H1 (cell line): ENCODE measurements at regions of chr10 and their contacts with region 1.

Region 1: GRCh38 chr10:114304017-114304570 is 65.0 kb downstream of the VWA2 start:
- DNase-seq: peak in 1 of 2 experiments; percentile 86
- H3K4me3 ChIP-seq: peak overlapping the region; percentile 38 to 78 (median 70)
- H3K27ac ChIP-seq: no peak overlapping the region
- H3K4me1 ChIP-seq: peaks cover 0 to 8% (median 2%) of the 10 kb centered on the region in 4 experiments; a peak in 4 of 7 replicates
- H3K27me3 ChIP-seq: no peaks in the 10 kb centered on the region
- CTCF ChIP-seq: peak; percentile 69 to 90 (median 90)
- EP300 ChIP-seq: no peak
- POLR2A ChIP-seq: no peak
- RAD21 ChIP-seq: peak; percentile 94

Region 2: DNA sequence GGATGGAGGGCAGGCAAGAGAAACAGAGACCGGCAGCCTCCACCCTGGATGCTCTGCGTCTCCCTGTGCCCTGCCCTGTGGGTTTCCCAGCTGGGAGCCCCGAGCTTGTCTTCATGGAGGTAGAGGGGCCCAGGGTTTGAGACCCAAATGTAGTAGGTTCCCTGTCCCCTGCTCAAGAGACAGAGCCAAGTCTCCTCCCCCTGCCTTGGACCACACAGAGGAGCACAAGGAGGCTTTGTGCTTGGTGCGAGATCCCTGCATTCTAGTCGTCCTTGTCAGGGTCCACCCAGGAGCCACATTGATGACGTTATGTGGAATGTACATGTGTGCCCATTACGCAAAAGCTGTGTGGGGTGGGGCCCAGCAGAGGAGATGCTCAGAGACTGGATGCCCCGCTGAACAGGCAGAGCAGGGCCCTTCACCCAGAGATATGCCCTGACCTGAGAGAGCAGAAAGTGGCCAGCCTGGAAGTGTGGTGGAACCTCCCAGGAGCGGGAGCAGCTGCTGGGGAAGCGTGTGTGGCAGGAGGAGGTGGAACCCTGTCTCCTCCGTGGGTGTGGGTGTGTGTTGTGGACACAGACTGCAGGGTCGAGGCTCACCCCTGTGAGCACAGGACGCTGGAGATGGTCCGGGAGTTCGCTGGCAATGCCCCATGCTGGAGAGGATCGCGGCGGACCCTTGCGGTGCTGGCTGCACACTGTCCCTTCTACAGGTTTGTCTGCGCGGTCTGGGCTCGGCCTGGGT is 25.8 kb before region 1 on chr10:
- CTCF ChIA-PET with region 1: interaction called, 24 read pairs
- POLR2A ChIA-PET with region 1: no interaction called
- DNase-seq: no peak
- H3K4me3 ChIP-seq: no peak overlapping the region
- H3K27ac ChIP-seq: no peak overlapping the region
- H3K4me1 ChIP-seq: no peaks in the 10 kb centered on the region; a peak in 1 of 7 replicates
- H3K27me3 ChIP-seq: no peaks in the 10 kb centered on the region; a peak in 1 of 7 replicates
- CTCF ChIP-seq: no peak
- EP300 ChIP-seq: no peak
- POLR2A ChIP-seq: no peak
- RAD21 ChIP-seq: no peak

Region 3: GRCh38 chr10:114328874-114329273 is 24.8 kb after region 1 on chr10:
- CTCF ChIA-PET with region 1: interaction called, 22 read pairs
- POLR2A ChIA-PET with region 1: interaction called, 3 read pairs
- DNase-seq: no peak
- H3K4me3 ChIP-seq: no peak overlapping the region
- H3K27ac ChIP-seq: no peak overlapping the region
- H3K4me1 ChIP-seq: no peaks in the 10 kb centered on the region; a peak in 1 of 7 replicates
- H3K27me3 ChIP-seq: no peaks in the 10 kb centered on the region
- CTCF ChIP-seq: no peak
- EP300 ChIP-seq: no peak
- POLR2A ChIP-seq: no peak
- RAD21 ChIP-seq: no peak

Region 4: DNA sequence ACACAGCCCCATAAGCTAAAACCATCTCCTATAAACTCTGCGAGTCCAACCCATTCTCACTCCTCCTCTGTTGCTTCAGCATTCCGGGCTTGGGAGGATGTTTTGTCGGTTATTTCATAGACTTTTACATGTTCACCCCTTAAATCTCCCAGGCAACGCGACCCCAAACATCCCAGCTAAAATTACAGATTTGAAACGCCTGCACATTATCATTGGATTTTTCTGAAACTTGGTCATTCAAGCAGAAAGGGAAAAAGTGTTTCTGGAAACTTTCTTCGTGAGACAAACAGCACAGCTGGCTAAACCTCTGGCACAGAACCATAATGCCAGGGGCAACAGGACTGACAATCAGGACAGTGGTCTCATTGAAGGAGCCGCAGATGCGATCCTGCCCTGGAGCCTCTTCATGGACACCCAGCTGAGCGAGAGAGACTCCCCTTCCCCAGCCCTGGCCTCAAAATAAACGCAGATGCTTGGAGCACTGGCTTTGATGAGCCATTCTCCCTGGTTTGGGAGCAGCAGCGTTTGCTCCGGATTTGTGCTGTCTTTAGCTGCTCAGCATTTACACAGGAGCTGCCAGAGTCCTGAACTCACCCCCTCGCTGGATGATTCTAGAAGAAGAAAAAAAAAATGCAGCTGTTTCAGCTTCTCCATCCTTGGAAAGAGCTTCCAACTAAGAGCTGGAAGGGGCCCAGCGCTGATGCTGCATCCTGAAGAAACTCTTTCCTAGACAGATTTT is 70.1 kb after region 1 on chr10:
- CTCF ChIA-PET with region 1: interaction called, 34 read pairs
- POLR2A ChIA-PET with region 1: no interaction called
- DNase-seq: no peak
- H3K4me3 ChIP-seq: no peak overlapping the region
- H3K27ac ChIP-seq: no peak overlapping the region
- H3K4me1 ChIP-seq: 0 out of 7 replicates have a peak, but pooled peaks cover 0 to 2% (median 0%) of the 10 kb centered on the region in 4 experiments
- H3K27me3 ChIP-seq: no peaks in the 10 kb centered on the region
- CTCF ChIP-seq: no peak
- EP300 ChIP-seq: no peak
- POLR2A ChIP-seq: no peak
- RAD21 ChIP-seq: no peak

Region 5: DNA sequence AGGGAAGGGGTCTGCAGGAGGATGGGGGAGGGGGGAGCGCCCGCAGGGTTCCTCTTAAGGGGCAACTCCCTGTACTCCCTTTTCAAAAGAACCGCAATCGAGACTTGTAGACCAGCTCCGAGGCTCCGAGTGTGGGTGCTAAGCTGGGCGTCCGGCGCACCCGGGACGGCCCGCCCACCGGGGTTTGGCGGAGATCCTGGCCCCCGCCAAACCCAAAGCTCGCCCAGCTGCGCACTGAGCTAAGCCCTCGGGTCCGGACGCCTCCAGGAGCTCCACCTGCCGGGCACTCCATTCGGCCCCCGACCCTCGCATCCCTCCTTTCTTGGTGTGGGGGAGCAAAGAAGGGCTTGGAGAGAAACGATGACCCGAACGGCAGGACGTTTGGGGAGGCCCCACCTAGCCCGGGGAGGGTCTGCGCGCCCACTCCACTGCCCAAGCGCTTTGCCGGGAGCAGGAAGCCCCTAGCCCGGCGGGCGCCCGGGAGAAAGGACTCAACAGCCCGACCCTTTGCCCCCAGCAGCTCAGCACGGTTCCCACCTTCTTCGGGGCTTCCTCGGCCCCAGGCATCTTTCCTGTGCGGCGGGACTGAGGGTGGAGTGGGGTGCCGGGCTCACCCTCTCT is 99.6 kb after region 1 on chr10:
- CTCF ChIA-PET with region 1: interaction called, 68 read pairs
- POLR2A ChIA-PET with region 1: interaction called, 4 read pairs
- DNase-seq: peak in 1 of 2 experiments; percentile 80
- H3K4me3 ChIP-seq: peak overlapping the region; percentile 59 to 75 (median 64)
- H3K27ac ChIP-seq: no peak overlapping the region
- H3K4me1 ChIP-seq: peaks cover 0 to 10% (median 2%) of the 10 kb centered on the region in 4 experiments; a peak in 4 of 7 replicates
- H3K27me3 ChIP-seq: peaks cover 9 to 30% (median 25%) of the 10 kb centered on the region in 4 experiments
- CTCF ChIP-seq: peak; percentile 34 to 47 (median 37)
- EP300 ChIP-seq: no peak
- POLR2A ChIP-seq: no peak
- RAD21 ChIP-seq: peak; percentile 27 to 44; a peak in 2 of 4 replicates

Region 6: DNA sequence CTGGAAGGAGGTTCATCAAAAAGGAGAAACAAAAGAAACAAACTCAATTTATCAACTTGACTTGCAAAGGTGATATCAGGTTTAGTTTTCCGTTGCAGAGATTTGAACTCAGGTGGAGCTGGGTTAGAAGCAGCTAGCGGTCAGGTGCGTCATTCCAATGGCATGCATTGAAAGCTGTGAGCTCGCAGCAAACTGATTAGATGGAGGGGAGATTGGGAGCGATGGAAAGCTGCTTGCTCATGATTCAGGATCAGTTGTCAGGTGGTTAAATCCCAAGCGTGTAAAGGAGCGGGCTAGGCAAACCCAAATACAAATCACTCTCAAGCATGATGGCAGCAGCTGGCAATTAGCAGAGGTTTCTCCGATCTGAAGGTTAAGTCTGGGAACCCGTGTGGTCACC is 149.5 kb after region 1 on chr10:
- CTCF ChIA-PET with region 1: interaction called, 91 read pairs
- POLR2A ChIA-PET with region 1: interaction called, 4 read pairs
- DNase-seq: no peak
- H3K4me3 ChIP-seq: no peak overlapping the region
- H3K27ac ChIP-seq: no peak overlapping the region
- H3K4me1 ChIP-seq: peaks cover 0 to 2% (median under 1%) of the 10 kb centered on the region in 4 experiments; a peak in 2 of 7 replicates
- H3K27me3 ChIP-seq: no peaks in the 10 kb centered on the region
- CTCF ChIP-seq: no peak
- EP300 ChIP-seq: no peak
- POLR2A ChIP-seq: no peak
- RAD21 ChIP-seq: no peak

Region 7: DNA sequence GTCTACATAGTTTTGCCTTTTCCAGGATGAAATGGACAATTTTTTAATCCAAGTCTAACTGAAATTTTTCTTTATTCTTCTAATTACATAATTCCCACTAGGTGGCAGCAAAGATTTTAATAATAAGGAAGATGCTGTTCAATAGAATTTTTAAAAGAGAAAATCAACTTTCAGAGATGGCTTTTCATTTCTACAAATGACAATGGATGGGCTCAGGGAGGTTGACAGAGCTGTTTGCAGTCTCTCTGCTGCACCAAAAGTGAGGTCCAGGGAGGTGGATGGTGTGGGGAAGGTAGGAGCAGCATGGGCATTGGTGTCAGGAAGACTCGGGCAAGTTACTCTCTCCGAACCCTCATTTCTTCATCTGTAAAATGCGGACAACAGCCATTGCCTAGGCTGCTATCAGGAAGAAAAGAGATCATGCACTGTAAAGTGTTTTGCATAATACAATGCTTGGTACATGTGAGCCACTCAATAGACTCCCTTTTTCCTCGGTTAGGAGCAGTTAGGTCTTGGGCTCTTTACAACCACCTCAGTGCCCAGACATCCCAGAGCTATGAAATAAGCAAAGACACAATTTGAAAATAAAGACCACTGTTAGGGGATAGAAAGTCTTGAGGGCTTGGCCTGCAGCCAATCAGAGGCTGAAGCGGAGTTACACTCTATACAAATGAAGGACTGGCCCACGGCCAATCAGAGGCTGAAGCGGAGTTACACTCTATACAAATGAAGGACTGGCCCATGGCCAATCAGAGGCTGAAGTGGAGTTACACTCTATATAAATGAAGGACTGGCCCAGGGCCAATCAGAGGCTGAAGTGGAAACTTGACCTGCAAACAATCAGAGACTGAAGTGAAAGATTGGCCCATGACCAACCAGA is 246.9 kb after region 1 on chr10:
- CTCF ChIA-PET with region 1: interaction called, 40 read pairs
- POLR2A ChIA-PET with region 1: no interaction called
- DNase-seq: no peak
- H3K4me3 ChIP-seq: no peak overlapping the region
- H3K27ac ChIP-seq: no peak overlapping the region
- H3K4me1 ChIP-seq: peaks cover 0 to 4% (median 0%) of the 10 kb centered on the region in 4 experiments; a peak in 1 of 7 replicates
- H3K27me3 ChIP-seq: no peaks in the 10 kb centered on the region
- CTCF ChIP-seq: peak in 1 of 3 experiments; percentile 8; a peak in 1 of 4 replicates
- EP300 ChIP-seq: no peak
- POLR2A ChIP-seq: no peak
- RAD21 ChIP-seq: peak in 1 of 2 experiments; percentile 39; a peak in 3 of 4 replicates